A549 (cell line): ENCODE measurements at regions of chr11 and their contacts with region 1.

Region 1: DNA sequence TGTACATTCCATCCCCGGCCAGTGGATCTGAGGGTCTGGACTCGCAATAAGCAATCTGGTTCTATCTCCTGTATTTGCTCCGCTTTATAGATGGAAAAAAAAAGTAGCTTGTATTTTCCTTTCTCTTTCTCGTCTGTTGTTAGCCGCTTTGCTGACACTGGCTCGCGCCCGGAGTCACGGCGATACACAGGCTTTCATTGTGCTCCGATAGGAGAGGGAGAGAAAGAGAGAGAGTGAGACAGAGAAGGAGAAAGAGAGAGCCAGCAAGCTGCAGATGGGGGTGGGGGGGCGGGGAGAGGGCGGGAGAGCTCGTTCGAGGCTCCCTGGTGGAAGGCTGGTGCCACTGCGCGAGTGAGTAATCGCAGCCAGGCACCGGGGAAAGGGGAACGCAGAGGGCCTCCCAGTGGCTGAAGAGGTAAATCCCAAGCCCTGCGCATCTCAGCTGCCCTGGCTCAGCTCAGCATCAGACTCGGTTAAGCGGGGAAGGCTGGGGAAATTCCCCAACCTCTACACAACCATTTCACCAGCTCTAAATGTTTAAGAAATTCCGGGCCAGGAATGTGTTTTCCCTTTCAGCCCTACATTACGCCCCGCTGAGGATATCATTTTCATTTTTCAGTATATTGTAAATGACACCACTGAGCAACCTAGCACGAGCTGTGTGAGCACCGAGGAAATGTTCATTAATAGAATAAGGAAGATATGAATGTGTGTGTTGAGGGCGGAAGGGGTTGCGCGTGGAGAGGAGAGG is at the start of gene MAML2:
- DNase-seq: peak; percentile 86 to 94
- ATAC-seq: peak; percentile 99
- H3K4me3 ChIP-seq: peak within 1 kb of the TSS; percentile 74
- H3K27ac ChIP-seq: peak within 1 kb of the TSS; percentile 83 to 85
- H3K4me1 ChIP-seq: peaks cover 24% of the 10 kb centered on the region
- CTCF ChIP-seq: peak; percentile 78
- EP300 ChIP-seq: no peak
- POLR2A ChIP-seq: no peak
- RAD21 ChIP-seq: peak; percentile 84 to 97
- polyA plus RNA-seq, gene MAML2: 2.5 and 3.2 TPM in 2 replicates

Region 2: DNA sequence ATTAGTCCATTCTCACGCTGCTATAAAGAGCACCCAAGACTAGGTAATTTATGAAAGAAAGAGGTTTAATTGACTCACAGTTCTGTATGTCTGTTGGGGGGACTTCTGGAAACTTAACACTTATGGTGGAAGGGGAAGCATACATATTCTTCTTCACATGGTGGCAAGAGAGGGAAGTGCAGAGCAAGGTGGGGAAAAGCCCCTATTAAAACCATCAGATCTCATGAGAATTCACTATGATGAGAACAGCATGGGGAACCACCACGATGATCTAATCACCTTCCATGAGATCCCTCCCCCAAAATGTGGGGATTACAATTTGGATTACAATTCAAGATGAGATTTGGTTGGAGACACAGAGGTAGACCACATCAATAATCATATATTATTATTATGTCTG is 527.1 kb before region 1 on chr11:
- CTCF ChIA-PET with region 1: no interaction called
- POLR2A ChIA-PET with region 1: no interaction called
- DNase-seq: no peak
- ATAC-seq: no peak
- H3K4me3 ChIP-seq: no peak overlapping the region
- H3K27ac ChIP-seq: no peak overlapping the region
- H3K4me1 ChIP-seq: no peaks in the 10 kb centered on the region
- CTCF ChIP-seq: no peak
- EP300 ChIP-seq: no peak
- POLR2A ChIP-seq: no peak
- RAD21 ChIP-seq: no peak

Region 3: GRCh38 chr11:96054870-96055705 is 288.0 kb before region 1 on chr11:
- CTCF ChIA-PET with region 1: interaction called, 51 read pairs
- POLR2A ChIA-PET with region 1: no interaction called
- DNase-seq: peak; percentile 7 to 26
- ATAC-seq: peak in 1 of 2 experiments; percentile 65; a peak in 3 of 6 replicates
- H3K4me3 ChIP-seq: no peak overlapping the region
- H3K27ac ChIP-seq: peak overlapping the region; percentile 6 to 9; a peak in 4 of 6 replicates
- H3K4me1 ChIP-seq: peaks cover 21% of the 10 kb centered on the region
- CTCF ChIP-seq: peak; percentile 59
- EP300 ChIP-seq: no peak
- POLR2A ChIP-seq: no peak
- RAD21 ChIP-seq: peak; percentile 67 to 68

Region 4: DNA sequence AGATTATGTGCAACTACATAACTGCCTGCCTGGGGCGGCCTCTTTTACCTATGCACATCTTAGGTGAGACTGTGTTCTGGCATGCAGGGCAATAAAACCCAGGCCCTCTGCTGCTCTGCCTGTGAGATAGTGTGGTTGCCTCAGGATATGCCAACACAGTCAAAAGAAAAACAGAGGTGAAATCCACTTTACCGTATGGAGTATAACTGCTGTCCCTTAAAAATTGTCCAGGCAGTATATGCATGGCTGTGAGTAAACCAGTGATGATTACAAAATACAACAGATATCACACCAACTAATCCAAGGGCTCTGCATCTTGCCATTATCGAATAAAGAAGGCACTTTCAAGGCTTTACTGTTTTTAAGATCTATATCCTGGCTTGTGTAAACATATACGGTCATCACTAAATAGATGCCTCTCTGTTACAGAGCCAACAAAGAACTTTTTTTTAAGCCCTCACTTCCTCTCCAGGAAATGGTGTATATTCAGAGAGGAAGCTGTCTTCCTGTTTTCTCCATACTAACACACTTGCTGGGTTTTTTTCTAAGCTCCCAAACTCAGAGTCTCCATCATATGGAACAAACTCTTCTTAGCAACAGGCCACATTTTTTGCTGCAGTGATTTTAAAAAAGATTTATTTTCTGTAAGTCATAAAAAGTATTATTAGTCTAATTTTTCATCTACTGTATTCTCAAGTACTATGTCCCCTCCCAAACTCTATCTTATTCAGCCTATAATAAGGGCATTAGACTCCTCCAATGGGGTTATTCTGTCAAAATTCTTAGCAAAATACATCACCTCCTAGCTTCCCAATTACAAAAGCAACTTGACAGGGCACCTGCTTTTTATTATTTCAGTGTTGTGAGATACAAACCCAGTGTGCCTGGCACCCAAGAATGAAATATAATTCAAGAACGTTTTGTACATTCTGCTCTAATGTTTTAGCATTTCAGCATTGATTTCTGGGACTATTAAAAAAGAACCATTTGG is 135.4 kb before region 1 on chr11:
- CTCF ChIA-PET with region 1: no interaction called
- POLR2A ChIA-PET with region 1: no interaction called
- DNase-seq: no peak
- ATAC-seq: no peak
- H3K4me3 ChIP-seq: no peak overlapping the region
- H3K27ac ChIP-seq: peak overlapping the region; percentile 13 to 40; a peak in 3 of 6 replicates
- H3K4me1 ChIP-seq: peaks cover 33% of the 10 kb centered on the region
- CTCF ChIP-seq: no peak
- EP300 ChIP-seq: no peak
- POLR2A ChIP-seq: no peak
- RAD21 ChIP-seq: no peak

Region 5: GRCh38 chr11:96242971-96243647 is 100.0 kb before region 1 on chr11:
- CTCF ChIA-PET with region 1: interaction called, 17 read pairs
- POLR2A ChIA-PET with region 1: interaction called, 14 read pairs
- DNase-seq: peak; percentile 83 to 96
- ATAC-seq: peak; percentile 99 to 100
- H3K4me3 ChIP-seq: peak overlapping the region; percentile 43
- H3K27ac ChIP-seq: peak overlapping the region; percentile 81 to 89
- H3K4me1 ChIP-seq: peaks cover 36% of the 10 kb centered on the region
- CTCF ChIP-seq: no peak
- EP300 ChIP-seq: no peak
- POLR2A ChIP-seq: no peak
- RAD21 ChIP-seq: no peak; a peak in 2 of 5 replicates

Region 6: GRCh38 chr11:96278039-96278897 is 64.9 kb before region 1 on chr11:
- CTCF ChIA-PET with region 1: interaction called, 15 read pairs
- POLR2A ChIA-PET with region 1: no interaction called
- DNase-seq: no peak
- ATAC-seq: no peak
- H3K4me3 ChIP-seq: no peak overlapping the region
- H3K27ac ChIP-seq: peak overlapping the region; percentile 9 to 69; a peak in 4 of 6 replicates
- H3K4me1 ChIP-seq: peaks cover 24% of the 10 kb centered on the region
- CTCF ChIP-seq: no peak
- EP300 ChIP-seq: no peak
- POLR2A ChIP-seq: no peak
- RAD21 ChIP-seq: no peak

Region 7: DNA sequence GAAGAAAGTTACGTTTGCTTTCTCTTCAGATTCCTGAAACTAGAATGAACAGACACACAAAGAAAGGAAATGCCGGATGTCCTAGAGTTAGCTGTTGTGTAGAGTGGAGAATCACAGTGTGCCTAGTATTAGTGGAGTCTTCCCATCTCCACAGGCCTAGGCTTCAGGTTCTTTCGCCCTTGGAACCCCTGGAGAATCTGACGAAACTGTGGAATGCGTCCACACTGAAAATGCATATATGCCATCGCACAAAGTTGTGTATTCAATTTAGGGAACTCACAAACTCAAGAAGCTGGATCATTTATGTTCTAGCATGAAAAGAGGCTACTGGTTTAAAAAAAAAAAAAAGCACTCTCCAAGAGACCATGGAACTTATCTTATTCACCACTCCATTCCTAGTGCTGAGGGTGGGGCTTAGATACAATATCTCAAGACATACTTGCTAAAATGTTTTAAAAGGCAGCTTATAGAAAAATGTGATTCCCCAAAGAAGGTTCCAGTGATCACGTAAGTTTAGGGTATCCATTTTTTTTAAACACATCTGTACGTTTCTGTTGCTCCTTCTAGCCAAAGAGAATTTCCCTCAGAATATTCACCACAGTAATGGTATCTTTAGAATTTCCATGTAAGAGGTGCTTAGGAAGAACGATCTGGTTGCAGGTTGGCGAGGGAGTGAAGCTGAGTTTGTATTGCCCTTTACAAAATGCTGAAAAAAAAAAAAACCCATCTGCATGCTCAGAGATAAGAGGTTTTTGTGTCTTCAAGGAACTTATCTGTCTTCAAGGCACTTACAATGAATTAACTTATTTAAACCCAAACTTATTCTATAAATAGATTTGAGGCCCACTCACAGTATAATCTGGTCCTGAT is 20.1 kb before region 1 on chr11:
- CTCF ChIA-PET with region 1: interaction called, 14 read pairs
- POLR2A ChIA-PET with region 1: no interaction called
- DNase-seq: no peak
- ATAC-seq: no peak
- H3K4me3 ChIP-seq: no peak overlapping the region
- H3K27ac ChIP-seq: no peak overlapping the region
- H3K4me1 ChIP-seq: peaks cover 21% of the 10 kb centered on the region
- CTCF ChIP-seq: no peak
- EP300 ChIP-seq: no peak
- POLR2A ChIP-seq: no peak
- RAD21 ChIP-seq: no peak